Activated CD4-positive, alpha-beta memory T cell treated with anti-CD3 and anti-CD28 coated beads, Interleukin-2, amount 10 ng/mL, durations not matched to agents 7 days and 5 days (primary cell): ENCODE measurements at regions of chr14 and their contacts with region 1.

Region 1: DNA sequence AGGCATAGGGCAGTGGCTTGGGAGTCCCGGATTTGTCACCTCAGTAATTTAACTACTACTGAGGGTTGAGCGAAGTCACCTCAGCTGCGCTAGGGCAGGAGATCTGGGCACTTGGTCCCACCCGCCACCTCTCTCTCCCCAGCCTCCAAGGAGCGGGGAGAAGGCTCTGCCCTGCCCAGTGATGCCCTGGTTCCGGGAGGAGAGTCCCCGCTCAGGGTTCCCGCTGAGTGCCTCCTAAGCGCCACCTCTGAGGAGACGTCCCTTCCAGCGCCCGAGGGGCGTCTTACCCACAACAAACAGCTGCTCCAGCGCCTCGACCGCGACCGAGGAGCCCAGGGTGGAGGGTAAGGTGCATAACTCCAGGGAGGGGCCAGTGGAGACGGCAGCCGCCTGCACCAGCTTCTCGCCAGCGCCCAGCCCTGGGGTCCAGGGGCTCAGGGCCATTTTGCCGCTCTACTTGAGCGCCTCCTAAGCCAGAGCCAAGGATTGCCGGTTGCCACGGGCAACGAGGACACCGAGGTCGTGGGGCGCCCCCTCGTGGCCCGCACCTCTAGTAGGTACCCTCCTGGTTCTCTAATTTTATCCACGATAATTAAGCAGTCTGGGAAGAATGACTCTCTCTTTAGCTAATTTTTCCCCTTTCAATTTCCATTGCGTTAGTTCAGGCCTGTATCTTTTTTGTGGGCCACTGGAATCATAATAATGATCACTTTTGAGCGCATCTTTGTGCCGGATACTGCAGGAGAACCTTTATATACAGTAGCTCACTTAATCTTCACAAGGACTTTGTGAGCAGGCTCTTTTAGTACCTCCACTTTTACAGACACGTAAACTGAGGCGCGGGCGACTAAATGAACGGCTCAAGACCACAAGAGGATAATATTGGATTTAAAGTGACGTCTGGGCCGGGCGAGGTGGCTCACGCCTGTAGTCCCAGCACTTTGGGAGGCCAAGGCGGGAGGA is at the start of gene CCDC175:
- DNase-seq: peak; percentile 85
- H3K4me3 Mint-ChIP-seq: peak within 1 kb of the TSS; percentile 60
- H3K27ac Mint-ChIP-seq: no peak within 1 kb of the TSS
- H3K4me1 Mint-ChIP-seq: peaks cover 7% of the 10 kb centered on the region
- H3K27me3 Mint-ChIP-seq: peaks cover 14% of the 10 kb centered on the region
- total RNA-seq, gene CCDC175: not detected

Region 2: DNA sequence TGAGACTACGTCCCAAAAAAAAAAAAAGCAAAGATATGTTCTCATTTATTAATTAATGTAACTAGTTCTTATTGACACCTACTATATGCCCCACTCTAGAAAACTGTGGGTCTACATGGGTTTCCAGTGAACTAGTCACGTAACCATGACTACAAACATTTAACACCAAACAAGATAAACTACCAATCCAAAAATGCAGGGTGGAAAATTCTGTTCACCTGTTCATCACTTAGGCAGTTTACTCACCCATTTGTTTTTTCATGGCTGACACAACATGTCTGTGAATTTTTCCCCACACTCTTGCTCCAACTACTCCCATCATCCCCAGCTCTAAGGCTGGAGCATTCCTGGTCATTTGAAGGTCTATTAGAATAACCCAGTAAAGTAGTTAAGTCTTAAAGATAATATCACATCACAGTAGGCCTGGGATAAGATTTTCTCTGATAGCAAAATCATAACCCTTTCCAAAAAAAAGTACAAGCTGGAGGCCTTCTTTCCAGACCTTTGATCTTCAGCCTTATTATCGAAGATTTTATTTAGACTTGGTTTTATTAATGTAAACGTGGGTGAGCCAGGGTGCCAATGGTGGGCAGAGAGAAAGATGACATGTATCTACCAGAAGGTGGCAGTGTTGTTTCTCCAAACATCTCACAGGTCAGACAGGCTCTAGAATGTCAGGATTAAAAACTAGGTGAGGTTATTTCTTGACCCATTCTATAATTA is 449.7 kb before region 1 on chr14:
- CTCF ChIA-PET with region 1: interaction called, 21 read pairs
- POLR2A ChIA-PET with region 1: no interaction called
- DNase-seq: no peak
- H3K4me3 Mint-ChIP-seq: no peak overlapping the region
- H3K27ac Mint-ChIP-seq: no peak overlapping the region
- H3K4me1 Mint-ChIP-seq: no peaks in the 10 kb centered on the region
- H3K27me3 Mint-ChIP-seq: peaks cover 24% of the 10 kb centered on the region

Region 3: GRCh38 chr14:59320763-59321640 is 255.6 kb before region 1 on chr14:
- CTCF ChIA-PET with region 1: no interaction called
- POLR2A ChIA-PET with region 1: no interaction called
- DNase-seq: no peak
- H3K4me3 Mint-ChIP-seq: no peak overlapping the region
- H3K27ac Mint-ChIP-seq: no peak overlapping the region
- H3K4me1 Mint-ChIP-seq: peaks cover 12% of the 10 kb centered on the region
- H3K27me3 Mint-ChIP-seq: no peaks in the 10 kb centered on the region

Region 4: GRCh38 chr14:59507063-59507780 is 69.4 kb before region 1 on chr14:
- CTCF ChIA-PET with region 1: interaction called, 17 read pairs
- POLR2A ChIA-PET with region 1: no interaction called
- DNase-seq: peak; percentile 59
- H3K4me3 Mint-ChIP-seq: no peak overlapping the region
- H3K27ac Mint-ChIP-seq: no peak overlapping the region
- H3K4me1 Mint-ChIP-seq: peaks cover 7% of the 10 kb centered on the region
- H3K27me3 Mint-ChIP-seq: peaks cover 5% of the 10 kb centered on the region

Region 5: GRCh38 chr14:59688224-59689170 is 111.9 kb after region 1 on chr14:
- CTCF ChIA-PET with region 1: no interaction called
- POLR2A ChIA-PET with region 1: no interaction called
- DNase-seq: peak; percentile 33
- H3K4me3 Mint-ChIP-seq: no peak overlapping the region
- H3K27ac Mint-ChIP-seq: no peak overlapping the region
- H3K4me1 Mint-ChIP-seq: no peaks in the 10 kb centered on the region
- H3K27me3 Mint-ChIP-seq: peaks cover 5% of the 10 kb centered on the region